ENCODE measurements at regions of chr17 and their contacts with region 1.

Region 1: GRCh38 chr17:41665566-41666236 is 23.0 kb upstream of the EIF1 start:
- DNase-seq: peak; percentile 89 to 100
- ATAC-seq: peak; percentile 72 to 91
- H3K4me3 ChIP-seq: peak overlapping the region; percentile 47
- H3K27ac ChIP-seq: peak overlapping the region; percentile 86 to 92
- H3K4me1 ChIP-seq: peaks cover 23% of the 10 kb centered on the region
- CTCF ChIP-seq: peak; percentile 98
- EP300 ChIP-seq: no peak
- POLR2A ChIP-seq: peak; percentile 74
- RAD21 ChIP-seq: peak in 1 of 2 experiments; percentile 46; a peak in 2 of 5 replicates

Region 2: GRCh38 chr17:40791787-40792436 is 873.8 kb before region 1 on chr17:
- CTCF ChIA-PET with region 1: interaction called, 21 read pairs
- POLR2A ChIA-PET with region 1: no interaction called
- DNase-seq: peak; percentile 45 to 61
- ATAC-seq: peak; percentile 73 to 74
- H3K4me3 ChIP-seq: no peak overlapping the region
- H3K27ac ChIP-seq: no peak overlapping the region
- H3K4me1 ChIP-seq: no peaks in the 10 kb centered on the region
- CTCF ChIP-seq: peak; percentile 98
- EP300 ChIP-seq: no peak
- POLR2A ChIP-seq: no peak
- RAD21 ChIP-seq: peak; percentile 83 to 86

Region 3: DNA sequence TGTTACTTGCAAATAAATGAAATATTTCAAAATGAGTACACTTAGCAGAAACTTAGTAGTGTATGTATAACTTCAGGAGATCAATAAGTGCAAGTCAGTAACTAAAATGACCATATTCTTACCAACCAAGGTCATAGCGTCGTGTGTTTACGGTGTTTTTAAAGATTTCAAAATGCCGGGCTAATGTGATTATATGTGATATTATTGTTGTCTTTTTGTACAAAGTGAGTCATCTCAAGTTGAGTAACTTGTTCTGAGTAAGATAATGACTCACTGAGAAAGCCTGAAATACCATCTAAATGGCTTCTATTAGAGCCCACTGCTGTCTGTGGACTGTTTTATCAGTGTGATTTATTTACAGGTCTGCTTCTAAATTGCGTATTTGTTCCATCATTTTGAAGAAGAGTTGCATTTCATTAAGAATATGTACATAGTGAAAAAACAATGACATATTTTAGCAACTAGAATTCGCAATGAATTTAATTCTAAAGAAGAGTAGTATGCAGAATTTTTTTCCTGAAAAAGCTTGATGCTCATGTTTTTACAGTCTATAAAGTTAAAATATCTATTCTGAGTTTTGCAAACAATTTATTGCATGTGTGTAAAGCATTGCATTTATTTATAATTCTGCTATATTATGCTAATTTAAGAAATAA is 811.4 kb before region 1 on chr17:
- CTCF ChIA-PET with region 1: interaction called, 418 read pairs
- POLR2A ChIA-PET with region 1: interaction called, 3 read pairs
- DNase-seq: peak; percentile 71 to 84
- ATAC-seq: peak; percentile 84 to 92
- H3K4me3 ChIP-seq: no peak overlapping the region
- H3K27ac ChIP-seq: peak overlapping the region; percentile 42 to 68
- H3K4me1 ChIP-seq: peaks cover 71% of the 10 kb centered on the region
- CTCF ChIP-seq: no peak
- EP300 ChIP-seq: peak; percentile 80; a peak in 3 of 5 replicates
- POLR2A ChIP-seq: no peak
- RAD21 ChIP-seq: peak in 1 of 2 experiments; percentile 42; a peak in 1 of 5 replicates

Region 4: GRCh38 chr17:41322094-41322902 is 343.4 kb before region 1 on chr17:
- CTCF ChIA-PET with region 1: interaction called, 13 read pairs
- POLR2A ChIA-PET with region 1: no interaction called
- DNase-seq: peak; percentile 46 to 68
- ATAC-seq: peak; percentile 67 to 79; a peak in 5 of 6 replicates
- H3K4me3 ChIP-seq: no peak overlapping the region
- H3K27ac ChIP-seq: 0 out of 6 replicates have a peak overlapping the region, but pooled peaks of 1 of the 2 experiments have one; percentile 43
- H3K4me1 ChIP-seq: no peaks in the 10 kb centered on the region
- CTCF ChIP-seq: peak; percentile 89
- EP300 ChIP-seq: no peak
- POLR2A ChIP-seq: no peak
- RAD21 ChIP-seq: peak; percentile 78 to 79

Region 5: GRCh38 chr17:41496820-41497408 is 168.8 kb before region 1 on chr17:
- CTCF ChIA-PET with region 1: interaction called, 11 read pairs
- POLR2A ChIA-PET with region 1: no interaction called
- DNase-seq: peak; percentile 91 to 95
- ATAC-seq: peak; percentile 91 to 99
- H3K4me3 ChIP-seq: no peak overlapping the region
- H3K27ac ChIP-seq: peak overlapping the region; percentile 76 to 88
- H3K4me1 ChIP-seq: peaks cover 27% of the 10 kb centered on the region
- CTCF ChIP-seq: peak; percentile 80
- EP300 ChIP-seq: no peak
- POLR2A ChIP-seq: peak; percentile 43
- RAD21 ChIP-seq: peak; percentile 89 to 92

Region 6: DNA sequence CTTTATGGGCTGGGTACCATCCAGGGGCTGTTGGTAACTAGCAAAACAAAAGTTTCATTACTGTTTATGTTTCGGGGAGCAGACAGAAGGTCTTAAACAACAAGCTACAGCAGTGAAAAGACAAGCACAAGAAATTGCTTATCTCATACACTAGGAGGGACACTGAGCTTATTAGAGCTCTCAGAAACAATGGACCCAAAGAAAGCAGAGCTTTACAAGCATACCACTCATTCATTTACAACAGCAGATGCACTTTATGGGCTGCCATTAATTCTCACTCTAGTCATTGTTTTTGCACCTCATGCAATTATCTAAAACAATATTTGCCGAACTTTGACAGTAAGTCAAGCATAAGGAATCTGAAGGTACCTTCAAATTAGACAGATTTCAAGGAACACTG is 63.2 kb before region 1 on chr17:
- CTCF ChIA-PET with region 1: interaction called, 11 read pairs
- POLR2A ChIA-PET with region 1: no interaction called
- DNase-seq: no peak
- ATAC-seq: peak; percentile 44 to 65; a peak in 4 of 6 replicates
- H3K4me3 ChIP-seq: no peak overlapping the region
- H3K27ac ChIP-seq: no peak overlapping the region
- H3K4me1 ChIP-seq: no peaks in the 10 kb centered on the region
- CTCF ChIP-seq: no peak
- EP300 ChIP-seq: no peak
- POLR2A ChIP-seq: no peak
- RAD21 ChIP-seq: no peak

Region 7: DNA sequence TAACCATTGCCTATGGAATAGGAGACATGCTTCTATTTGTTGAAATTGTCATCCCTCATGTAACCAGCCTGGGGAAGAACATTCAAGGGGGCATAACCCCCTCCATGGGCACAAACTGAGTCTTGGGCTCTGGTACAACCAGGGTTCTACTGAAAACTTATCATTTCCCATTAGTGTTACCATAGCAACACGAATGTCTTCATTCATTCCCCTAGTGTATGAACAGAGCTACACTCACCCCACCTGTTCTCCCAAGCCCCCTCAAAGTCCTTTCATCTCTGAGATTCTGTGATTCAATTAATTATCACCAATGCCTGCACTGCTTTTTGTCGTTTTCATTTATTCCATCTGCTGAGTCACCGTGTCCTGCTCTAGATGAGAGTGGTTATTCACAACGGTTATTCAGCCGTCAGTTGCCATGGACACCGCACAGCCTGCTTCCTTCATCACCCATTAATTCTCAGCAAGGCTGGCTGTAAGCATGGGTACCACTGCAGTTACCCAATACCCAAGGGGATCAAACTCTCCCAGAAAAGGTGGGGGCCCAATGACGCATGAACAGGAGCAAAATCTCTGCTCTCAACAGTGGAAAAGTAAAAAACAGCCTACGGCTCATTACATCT is 44.9 kb after region 1 on chr17:
- CTCF ChIA-PET with region 1: interaction called, 13 read pairs
- POLR2A ChIA-PET with region 1: no interaction called
- DNase-seq: peak in 1 of 2 experiments; percentile 62
- ATAC-seq: peak; percentile 20 to 27; a peak in 2 of 6 replicates
- H3K4me3 ChIP-seq: no peak overlapping the region
- H3K27ac ChIP-seq: no peak overlapping the region
- H3K4me1 ChIP-seq: peaks cover 5% of the 10 kb centered on the region
- CTCF ChIP-seq: no peak
- EP300 ChIP-seq: no peak
- POLR2A ChIP-seq: no peak
- RAD21 ChIP-seq: no peak

Region 8: GRCh38 chr17:41754066-41754465 is 88.4 kb after region 1 on chr17:
- CTCF ChIA-PET with region 1: no interaction called
- POLR2A ChIA-PET with region 1: no interaction called
- DNase-seq: no peak
- ATAC-seq: no peak
- H3K4me3 ChIP-seq: no peak overlapping the region
- H3K27ac ChIP-seq: no peak overlapping the region
- H3K4me1 ChIP-seq: no peaks in the 10 kb centered on the region
- CTCF ChIP-seq: no peak
- EP300 ChIP-seq: no peak
- POLR2A ChIP-seq: no peak
- RAD21 ChIP-seq: no peak

Measured in A549 (cell line).